ENCODE measurements at regions of chr7 and their contacts with region 1.

Region 1: DNA sequence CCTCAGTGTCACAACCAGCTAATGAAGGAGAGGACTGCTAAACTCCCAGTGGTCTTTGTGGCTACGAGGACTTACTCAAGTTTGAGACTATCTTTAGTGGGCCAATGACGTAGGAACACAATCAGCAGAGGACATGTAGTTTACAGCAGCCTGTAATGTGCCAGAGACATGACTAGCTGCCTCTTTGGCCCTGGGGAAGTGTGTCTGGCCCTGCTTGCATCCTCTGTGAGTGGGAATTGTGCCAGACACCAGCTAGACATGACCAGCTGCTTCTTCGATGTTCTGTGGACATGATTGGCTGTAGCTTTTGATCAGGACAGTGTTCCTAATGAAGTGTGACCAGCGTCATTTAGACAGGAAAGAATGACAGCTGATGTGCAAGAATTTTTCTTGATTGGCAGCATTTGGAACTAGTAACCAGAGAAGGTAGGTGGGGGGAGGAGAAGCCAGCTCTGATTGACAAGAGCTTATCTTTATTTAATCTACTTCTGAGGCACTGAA is 141.7 kb downstream of the AUTS2 start:
- DNase-seq: peak; percentile 81
- ATAC-seq: peak; percentile 82
- H3K4me3 ChIP-seq: no peak overlapping the region
- H3K27ac ChIP-seq: peak overlapping the region; percentile 29
- H3K4me1 ChIP-seq: peaks cover 32% of the 10 kb centered on the region
- H3K27me3 ChIP-seq: no peaks in the 10 kb centered on the region
- CTCF ChIP-seq: no peak
- EP300 ChIP-seq: peak; percentile 62 to 67; a peak in 2 of 4 replicates
- POLR2A ChIP-seq: peak; percentile 48; the same call in 1 of the 2 replicates
- RAD21 ChIP-seq: 0 out of 2 replicates have a peak, but pooled peaks have one; percentile 9

Region 2: DNA sequence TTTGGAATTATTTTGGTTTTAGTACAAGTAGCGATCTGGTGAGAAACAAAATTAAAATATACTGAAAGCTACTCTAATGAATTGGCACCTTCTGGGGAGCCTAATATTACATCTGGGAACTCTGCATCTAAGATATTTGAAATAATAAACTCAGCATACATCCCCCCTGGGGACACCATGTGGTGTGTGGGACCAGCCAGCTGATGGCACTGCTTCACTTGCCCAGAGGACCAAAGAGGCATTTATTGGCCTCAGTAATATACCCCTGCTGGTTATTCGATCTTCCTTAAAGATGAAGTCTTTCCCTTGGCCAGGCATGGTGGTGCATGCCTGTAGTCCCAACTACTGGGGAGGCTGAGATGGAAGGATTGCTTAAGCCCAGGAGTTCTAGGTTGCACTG is 336.8 kb before region 1 on chr7:
- CTCF ChIA-PET with region 1: no interaction called
- POLR2A ChIA-PET with region 1: no interaction called
- RAD21 ChIA-PET with region 1: no interaction called
- SMC1A ChIA-PET with region 1: no interaction called
- in situ Hi-C with region 1: no loop called
- intact Hi-C with region 1: loop called (anchors 10 kb)
- DNase-seq: no peak
- ATAC-seq: peak; percentile 95
- H3K4me3 ChIP-seq: no peak overlapping the region
- H3K27ac ChIP-seq: no peak overlapping the region
- H3K4me1 ChIP-seq: no peaks in the 10 kb centered on the region
- H3K27me3 ChIP-seq: no peaks in the 10 kb centered on the region
- CTCF ChIP-seq: peak; percentile 39 to 47 (median 43); a peak in 5 of 6 replicates
- EP300 ChIP-seq: no peak
- POLR2A ChIP-seq: no peak
- RAD21 ChIP-seq: peak; percentile 74

Region 3: DNA sequence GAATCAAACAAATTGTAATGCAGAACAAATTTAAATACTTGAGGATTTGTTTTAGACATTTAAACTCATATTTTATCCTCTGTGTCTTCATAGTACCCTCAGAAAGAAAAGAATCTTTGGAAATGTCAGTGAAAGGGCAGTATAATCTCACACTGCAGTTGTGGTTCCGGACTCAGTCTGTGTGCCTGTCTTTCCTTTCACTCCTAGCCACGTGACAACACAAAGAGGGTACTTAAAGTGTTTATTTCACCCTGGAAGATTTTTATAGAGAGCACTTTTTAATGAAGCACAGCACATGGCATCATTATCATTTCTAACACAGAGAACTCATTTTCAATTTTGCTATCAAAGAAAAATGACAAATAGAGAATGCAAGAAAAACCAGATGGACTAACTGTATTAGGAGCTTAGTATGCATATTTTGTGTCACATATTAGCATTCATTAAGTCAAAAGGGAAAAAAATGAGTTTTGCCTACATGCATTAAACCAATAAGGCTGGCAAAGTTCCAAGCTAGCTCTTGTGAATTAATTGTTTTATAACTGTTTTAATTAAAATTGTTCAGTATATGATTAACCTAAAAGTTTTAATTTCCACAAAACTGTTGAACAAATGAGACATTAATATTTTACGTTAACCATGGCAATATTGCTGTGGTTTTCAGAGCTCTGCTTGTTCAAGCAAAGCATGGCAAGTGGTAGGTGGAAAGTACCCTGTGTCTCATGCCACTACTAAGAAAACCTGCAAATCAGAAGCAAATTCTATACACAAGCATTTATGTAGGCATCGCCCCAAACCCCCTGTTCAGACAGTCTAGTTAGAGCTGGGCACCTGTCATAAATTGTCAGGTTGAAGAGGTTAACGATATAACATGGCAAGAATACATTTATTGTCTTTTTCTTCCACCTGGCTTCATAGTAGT is 75.8 kb before region 1 on chr7:
- CTCF ChIA-PET with region 1: interaction called, 3 read pairs
- POLR2A ChIA-PET with region 1: interaction called, 9 read pairs
- RAD21 ChIA-PET with region 1: interaction called, 26 read pairs
- SMC1A ChIA-PET with region 1: interaction called, 53 read pairs
- in situ Hi-C with region 1: no loop called
- intact Hi-C with region 1: no loop called
- DNase-seq: no peak
- ATAC-seq: peak; percentile 81
- H3K4me3 ChIP-seq: no peak overlapping the region
- H3K27ac ChIP-seq: peak overlapping the region; percentile 6; the same call in 1 of the 2 replicates
- H3K4me1 ChIP-seq: peaks cover 33% of the 10 kb centered on the region
- H3K27me3 ChIP-seq: no peaks in the 10 kb centered on the region
- CTCF ChIP-seq: no peak
- EP300 ChIP-seq: peak in 1 of 2 experiments; percentile 13; a peak in 1 of 4 replicates
- POLR2A ChIP-seq: no peak
- RAD21 ChIP-seq: no peak

Region 4: GRCh38 chr7:69696054-69696591 is 43.9 kb before region 1 on chr7:
- CTCF ChIA-PET with region 1: interaction called, 14 read pairs
- POLR2A ChIA-PET with region 1: interaction called, 14 read pairs
- RAD21 ChIA-PET with region 1: interaction called, 47 read pairs
- SMC1A ChIA-PET with region 1: interaction called, 70 read pairs
- in situ Hi-C with region 1: no loop called
- intact Hi-C with region 1: loop called (anchors 2 kb)
- DNase-seq: peak; percentile 88
- ATAC-seq: peak; percentile 82
- H3K4me3 ChIP-seq: no peak overlapping the region; the same call in 1 of the 2 replicates
- H3K27ac ChIP-seq: peak overlapping the region; percentile 41
- H3K4me1 ChIP-seq: peaks cover 59% of the 10 kb centered on the region
- H3K27me3 ChIP-seq: no peaks in the 10 kb centered on the region
- CTCF ChIP-seq: no peak
- EP300 ChIP-seq: peak; percentile 91 to 97
- POLR2A ChIP-seq: no peak
- RAD21 ChIP-seq: peak; percentile 7; the same call in 1 of the 2 replicates

Region 5: DNA sequence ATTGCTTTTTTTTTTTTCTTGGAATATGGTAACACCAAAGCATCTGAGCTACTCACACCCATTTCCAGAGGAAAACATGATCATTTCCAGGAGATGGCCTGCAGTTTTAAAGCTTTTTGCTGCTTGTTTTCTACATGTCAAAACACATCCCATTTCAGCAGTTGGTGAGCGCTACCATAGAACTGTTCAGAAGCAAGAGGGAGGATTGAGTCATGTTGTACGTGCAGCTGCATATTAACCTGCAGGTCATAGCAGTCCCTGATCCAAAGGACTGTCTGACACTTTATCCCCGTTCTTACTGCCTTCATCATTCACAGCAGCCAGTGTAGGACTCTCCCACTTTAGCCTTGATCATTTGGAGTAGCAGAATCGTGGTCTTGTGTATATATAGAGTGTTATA is 17.1 kb before region 1 on chr7:
- CTCF ChIA-PET with region 1: interaction called, 6 read pairs
- POLR2A ChIA-PET with region 1: interaction called, 5 read pairs
- RAD21 ChIA-PET with region 1: interaction called, 3 read pairs
- SMC1A ChIA-PET with region 1: interaction called, 18 read pairs
- in situ Hi-C with region 1: no loop called
- intact Hi-C with region 1: no loop called
- DNase-seq: no peak
- ATAC-seq: no peak
- H3K4me3 ChIP-seq: no peak overlapping the region
- H3K27ac ChIP-seq: no peak overlapping the region
- H3K4me1 ChIP-seq: no peaks in the 10 kb centered on the region
- H3K27me3 ChIP-seq: no peaks in the 10 kb centered on the region
- CTCF ChIP-seq: no peak
- EP300 ChIP-seq: no peak
- POLR2A ChIP-seq: no peak
- RAD21 ChIP-seq: no peak

Region 6: GRCh38 chr7:69768986-69769571 is 29.1 kb after region 1 on chr7:
- CTCF ChIA-PET with region 1: interaction called, 4 read pairs
- POLR2A ChIA-PET with region 1: interaction called, 15 read pairs
- RAD21 ChIA-PET with region 1: interaction called, 42 read pairs
- SMC1A ChIA-PET with region 1: interaction called, 50 read pairs
- in situ Hi-C with region 1: no loop called
- intact Hi-C with region 1: no loop called
- DNase-seq: no peak
- ATAC-seq: no peak
- H3K4me3 ChIP-seq: no peak overlapping the region
- H3K27ac ChIP-seq: no peak overlapping the region
- H3K4me1 ChIP-seq: peaks cover 16% of the 10 kb centered on the region
- H3K27me3 ChIP-seq: no peaks in the 10 kb centered on the region
- CTCF ChIP-seq: no peak
- EP300 ChIP-seq: no peak
- POLR2A ChIP-seq: no peak
- RAD21 ChIP-seq: no peak

Region 7: GRCh38 chr7:69906283-69906995 is 166.5 kb after region 1 on chr7:
- CTCF ChIA-PET with region 1: interaction called, 3 read pairs
- POLR2A ChIA-PET with region 1: no interaction called
- RAD21 ChIA-PET with region 1: interaction called, 7 read pairs
- SMC1A ChIA-PET with region 1: interaction called, 10 read pairs
- in situ Hi-C with region 1: no loop called
- intact Hi-C with region 1: no loop called
- DNase-seq: peak; percentile 97
- ATAC-seq: peak; percentile 90
- H3K4me3 ChIP-seq: no peak overlapping the region
- H3K27ac ChIP-seq: peak overlapping the region; percentile 88
- H3K4me1 ChIP-seq: peaks cover 22% of the 10 kb centered on the region
- H3K27me3 ChIP-seq: no peaks in the 10 kb centered on the region
- CTCF ChIP-seq: no peak
- EP300 ChIP-seq: peak; percentile 94 to 96
- POLR2A ChIP-seq: no peak
- RAD21 ChIP-seq: no peak

Measured in GM12878 (cell line).